ENCODE measurements at regions of chr14 and their contacts with region 1.

Region 1: GRCh38 chr14:92951912-92952471 is 29.0 kb downstream of the CHGA start:
- DNase-seq: peak; percentile 70 to 84
- ATAC-seq: peak; percentile 93 to 97
- H3K4me3 ChIP-seq: no peak overlapping the region
- H3K27ac ChIP-seq: peak overlapping the region; percentile 61 to 64; a peak in 5 of 6 replicates
- H3K4me1 ChIP-seq: peaks cover 10% of the 10 kb centered on the region
- CTCF ChIP-seq: peak; percentile 95
- EP300 ChIP-seq: no peak
- POLR2A ChIP-seq: no peak
- RAD21 ChIP-seq: peak; percentile 98

Region 2: GRCh38 chr14:92937051-92937937 is 14.7 kb before region 1 on chr14:
- CTCF ChIA-PET with region 1: interaction called, 20 read pairs
- POLR2A ChIA-PET with region 1: no interaction called
- DNase-seq: peak in 1 of 2 experiments; percentile 41
- ATAC-seq: peak; percentile 40; a peak in 3 of 6 replicates
- H3K4me3 ChIP-seq: no peak overlapping the region
- H3K27ac ChIP-seq: no peak overlapping the region
- H3K4me1 ChIP-seq: peaks cover 11% of the 10 kb centered on the region; the same call in 2 of the 3 replicates
- CTCF ChIP-seq: no peak
- EP300 ChIP-seq: no peak
- POLR2A ChIP-seq: no peak
- RAD21 ChIP-seq: no peak

Region 3: DNA sequence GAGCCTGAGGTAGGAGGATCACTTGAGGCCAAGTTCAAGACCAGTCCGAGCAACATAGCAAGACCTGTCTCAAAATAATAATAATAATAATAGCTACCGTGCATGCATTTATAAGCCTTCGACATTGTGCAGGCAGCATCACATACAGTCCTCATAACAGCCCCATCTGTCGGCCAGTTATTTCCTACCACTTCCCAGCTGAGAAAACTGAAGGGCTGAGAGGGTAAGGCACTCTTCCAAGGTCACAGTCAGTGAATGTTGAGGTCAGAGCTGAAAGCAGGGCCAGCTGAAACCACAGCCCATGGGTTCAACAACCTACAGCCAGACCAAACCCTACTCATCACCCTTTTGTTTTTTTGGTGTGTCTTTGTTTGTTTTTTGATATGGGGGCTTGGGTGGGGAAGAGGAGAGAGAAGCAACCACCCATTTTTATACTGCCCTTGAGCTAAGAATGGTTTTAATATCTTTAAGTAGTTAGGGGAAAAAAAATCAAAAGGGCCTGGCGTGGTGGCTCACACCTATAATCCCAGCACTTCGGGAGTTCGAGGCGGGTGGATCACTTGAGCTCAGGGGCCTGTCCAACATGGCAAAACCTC is 180.6 kb after region 1 on chr14:
- CTCF ChIA-PET with region 1: interaction called, 57 read pairs
- POLR2A ChIA-PET with region 1: no interaction called
- DNase-seq: peak; percentile 57 to 59
- ATAC-seq: peak; percentile 83 to 91; a peak in 5 of 6 replicates
- H3K4me3 ChIP-seq: no peak overlapping the region
- H3K27ac ChIP-seq: no peak overlapping the region
- H3K4me1 ChIP-seq: peaks cover 22% of the 10 kb centered on the region
- CTCF ChIP-seq: peak; percentile 38
- EP300 ChIP-seq: no peak
- POLR2A ChIP-seq: no peak
- RAD21 ChIP-seq: peak; percentile 25 to 42; a peak in 2 of 5 replicates

Region 4: GRCh38 chr14:93142854-93143652 is 191.1 kb after region 1 on chr14:
- CTCF ChIA-PET with region 1: interaction called, 29 read pairs
- POLR2A ChIA-PET with region 1: no interaction called
- DNase-seq: no peak
- ATAC-seq: no peak
- H3K4me3 ChIP-seq: no peak overlapping the region
- H3K27ac ChIP-seq: no peak overlapping the region
- H3K4me1 ChIP-seq: no peaks in the 10 kb centered on the region
- CTCF ChIP-seq: no peak
- EP300 ChIP-seq: no peak
- POLR2A ChIP-seq: no peak
- RAD21 ChIP-seq: no peak

Region 5: GRCh38 chr14:93173943-93174395 is 222.0 kb after region 1 on chr14:
- CTCF ChIA-PET with region 1: interaction called, 13 read pairs
- POLR2A ChIA-PET with region 1: no interaction called
- DNase-seq: no peak
- ATAC-seq: peak; percentile 35 to 55; a peak in 3 of 6 replicates
- H3K4me3 ChIP-seq: no peak overlapping the region
- H3K27ac ChIP-seq: no peak overlapping the region
- H3K4me1 ChIP-seq: peaks cover 7% of the 10 kb centered on the region; the same call in 1 of the 3 replicates
- CTCF ChIP-seq: no peak
- EP300 ChIP-seq: no peak
- POLR2A ChIP-seq: no peak
- RAD21 ChIP-seq: no peak

Region 6: GRCh38 chr14:93619176-93619793 is 667.3 kb after region 1 on chr14:
- CTCF ChIA-PET with region 1: no interaction called
- POLR2A ChIA-PET with region 1: no interaction called
- DNase-seq: peak; percentile 33 to 62
- ATAC-seq: peak; percentile 54 to 69; a peak in 3 of 6 replicates
- H3K4me3 ChIP-seq: no peak overlapping the region
- H3K27ac ChIP-seq: no peak overlapping the region
- H3K4me1 ChIP-seq: no peaks in the 10 kb centered on the region
- CTCF ChIP-seq: peak; percentile 72
- EP300 ChIP-seq: no peak
- POLR2A ChIP-seq: no peak
- RAD21 ChIP-seq: peak; percentile 65 to 75